ENCODE measurements at regions of chr3 and their contacts with region 1.

Region 1: DNA sequence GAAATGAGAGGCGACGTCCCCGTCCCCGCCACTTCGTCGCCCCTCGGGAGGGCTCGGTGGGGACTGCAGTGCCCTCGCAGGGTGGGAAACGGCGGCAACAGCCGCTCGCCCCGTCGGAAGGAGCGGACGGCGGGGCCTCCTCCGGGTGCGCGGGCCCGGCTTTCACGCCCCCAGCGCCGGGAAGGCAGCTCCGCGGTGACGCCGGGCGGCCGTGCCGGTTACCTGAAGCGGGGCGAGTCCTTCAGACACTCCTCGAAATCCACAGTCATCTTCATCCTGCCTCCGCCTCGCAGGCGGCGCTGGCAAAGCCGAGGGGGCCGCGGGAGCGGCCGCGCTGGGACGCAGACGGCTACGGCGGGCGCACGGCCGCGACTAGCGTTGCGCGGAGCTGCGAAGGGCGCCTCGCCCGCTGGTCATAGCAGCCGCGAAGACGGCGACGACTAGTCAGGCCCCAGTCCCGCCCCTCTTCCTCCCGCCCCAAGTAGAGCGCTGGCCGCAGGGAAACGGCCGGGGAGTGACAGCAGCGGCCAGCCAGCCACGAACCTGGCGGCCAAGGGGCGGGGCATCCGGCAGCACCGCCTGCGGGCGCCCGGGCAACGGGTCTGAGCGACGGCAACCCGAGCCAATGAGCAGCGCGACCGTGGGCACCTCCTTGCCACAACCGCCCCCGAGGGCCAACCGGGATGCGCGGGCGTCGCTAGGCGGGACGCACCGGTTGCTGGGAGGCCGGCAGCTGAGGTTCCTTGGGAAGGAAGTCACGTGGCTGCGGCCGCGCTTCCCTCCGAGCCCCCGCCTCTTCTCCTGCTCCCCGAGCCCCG is at the start of gene ACAP2:
- DNase-seq: peak; percentile 96 to 100 (median 98)
- ATAC-seq: peak; percentile 96
- H3K4me3 ChIP-seq: peak within 1 kb of the TSS; percentile 91
- H3K4me3 Mint-ChIP-seq: peak within 1 kb of the TSS; percentile 94 to 98 (median 96)
- H3K27ac ChIP-seq: peak within 1 kb of the TSS; percentile 87
- H3K27ac Mint-ChIP-seq: peak within 1 kb of the TSS; percentile 84 to 95 (median 91)
- H3K4me1 ChIP-seq: peaks cover 24 to 38% of the 10 kb centered on the region in 2 donors
- H3K4me1 Mint-ChIP-seq: peaks cover 30 to 68% (median 55%) of the 10 kb centered on the region in 7 donors
- H3K27me3 ChIP-seq: no peaks in the 10 kb centered on the region
- H3K27me3 Mint-ChIP-seq: no peaks in the 10 kb centered on the region
- total RNA-seq, gene ACAP2: 68.1 to 111 (median 74.2) TPM

Region 2: DNA sequence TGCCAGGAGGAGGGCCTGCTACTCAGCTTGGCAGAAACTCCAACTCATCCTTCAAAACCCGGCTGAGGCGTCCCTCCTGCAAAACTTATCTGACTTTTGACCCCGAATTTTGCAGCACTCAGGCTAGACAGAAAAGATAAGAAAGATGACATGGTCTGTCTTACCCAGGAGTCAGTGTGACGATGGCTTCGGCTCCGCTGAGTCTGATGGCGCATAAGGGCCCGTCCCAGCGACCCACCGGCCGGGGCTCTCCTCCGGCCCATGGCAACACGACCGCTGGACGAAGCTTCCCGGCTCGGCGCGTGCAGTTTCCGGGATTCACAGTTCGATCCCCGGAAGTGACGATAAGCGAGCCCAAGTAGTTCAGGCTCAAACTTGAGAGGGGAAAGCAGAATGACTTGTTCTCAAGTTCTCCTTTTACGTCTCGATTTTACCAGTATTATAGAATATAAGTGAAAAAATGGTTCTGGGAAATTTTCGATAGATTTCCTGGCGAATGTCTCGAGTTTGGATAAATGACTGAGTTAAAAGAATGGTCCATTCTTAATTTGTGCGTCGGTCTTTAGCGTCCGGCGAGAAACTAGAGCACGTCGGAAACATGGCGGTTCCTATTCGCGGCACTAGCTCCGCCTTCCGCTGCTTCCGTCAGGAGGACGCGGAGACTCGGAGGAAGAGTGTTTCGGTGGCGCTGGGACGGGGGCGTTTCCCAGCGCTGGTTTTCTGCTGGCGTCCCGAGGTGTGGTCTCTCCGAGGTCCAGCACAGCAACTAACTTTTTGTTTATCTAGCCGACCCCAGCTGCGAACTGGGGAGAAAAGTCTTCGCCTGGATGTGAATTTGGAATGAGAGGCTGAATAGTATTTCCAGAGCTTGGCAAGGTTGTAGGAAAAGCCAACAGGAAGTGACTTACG is 770.6 kb before region 1 on chr3 and contains the start of gene LSG1:
- CTCF ChIA-PET with region 1: no interaction called
- POLR2A ChIA-PET with region 1: interaction called, 3 read pairs
- intact Hi-C with region 1: loop called (anchors 1 to 2 kb)
- DNase-seq: peak; percentile 68 to 92 (median 87)
- ATAC-seq: peak; percentile 98
- H3K4me3 ChIP-seq: peak within 1 kb of the TSS; percentile 96
- H3K4me3 Mint-ChIP-seq: peak within 1 kb of the TSS; percentile 95 to 100 (median 98)
- H3K27ac ChIP-seq: peak within 1 kb of the TSS; percentile 90
- H3K27ac Mint-ChIP-seq: peak within 1 kb of the TSS; percentile 96 to 99 (median 98)
- H3K4me1 ChIP-seq: peaks cover 11 to 19% of the 10 kb centered on the region in 2 donors
- H3K4me1 Mint-ChIP-seq: peaks cover 21 to 52% (median 38%) of the 10 kb centered on the region in 7 donors
- H3K27me3 ChIP-seq: no peaks in the 10 kb centered on the region
- H3K27me3 Mint-ChIP-seq: no peaks in the 10 kb centered on the region
- total RNA-seq, gene LSG1: 33.5 to 59.2 (median 54.9) TPM

Region 3: GRCh38 chr3:194769020-194769643 is 673.6 kb before region 1 on chr3:
- CTCF ChIA-PET with region 1: no interaction called
- POLR2A ChIA-PET with region 1: no interaction called
- intact Hi-C with region 1: loop called in 1 of 2 experiments (anchors 10 kb)
- DNase-seq: peak; percentile 59 to 98 (median 93)
- ATAC-seq: peak; percentile 99
- H3K4me3 ChIP-seq: peak overlapping the region; percentile 70
- H3K4me3 Mint-ChIP-seq: peak overlapping the region; percentile 77 to 95 (median 88)
- H3K27ac ChIP-seq: peak overlapping the region; percentile 78
- H3K27ac Mint-ChIP-seq: peak overlapping the region; percentile 57 to 98 (median 94)
- H3K4me1 ChIP-seq: peaks cover 6 to 9% of the 10 kb centered on the region in 2 donors
- H3K4me1 Mint-ChIP-seq: peaks cover 8 to 35% (median 23%) of the 10 kb centered on the region in 7 donors
- H3K27me3 ChIP-seq: no peaks in the 10 kb centered on the region
- H3K27me3 Mint-ChIP-seq: peaks cover 0 to 23% (median 7%) of the 10 kb centered on the region in 5 donors

Region 4: DNA sequence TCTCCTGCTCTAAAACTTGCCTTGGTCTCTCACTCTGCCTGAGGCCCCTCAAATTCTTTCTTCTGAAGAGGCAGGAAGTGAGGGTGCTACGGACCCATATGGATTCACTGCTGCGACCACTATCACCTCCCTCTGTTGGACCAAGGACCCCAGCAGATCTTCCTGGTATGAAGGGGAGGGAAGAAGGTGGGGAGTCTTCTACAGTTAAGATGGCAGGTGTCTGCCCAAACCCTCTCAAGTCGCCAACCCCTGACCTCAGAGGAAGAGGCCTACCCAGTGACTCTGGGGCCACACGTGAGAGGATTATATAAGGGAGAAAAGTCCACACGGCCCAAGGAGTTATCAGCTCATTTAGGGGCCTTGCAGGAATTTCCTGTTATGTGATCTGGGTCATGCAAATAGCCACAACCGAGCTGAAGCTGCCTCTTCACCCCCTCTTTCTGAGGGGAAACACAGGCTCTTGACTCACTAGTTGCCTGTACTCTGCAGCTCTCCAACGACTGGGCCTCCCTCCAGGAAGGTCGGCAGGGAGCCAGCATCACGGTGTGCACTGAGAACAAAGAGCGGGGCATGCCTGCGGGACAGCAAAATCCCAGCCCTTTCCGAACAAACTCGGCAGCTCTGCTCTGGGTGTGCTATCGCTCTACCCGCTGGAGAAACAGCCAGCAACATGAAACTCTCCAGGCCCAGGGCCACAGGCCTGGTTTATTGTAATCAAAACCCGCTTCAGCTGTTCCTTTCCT is 287.8 kb before region 1 on chr3:
- CTCF ChIA-PET with region 1: no interaction called
- POLR2A ChIA-PET with region 1: no interaction called
- intact Hi-C with region 1: no loop called
- DNase-seq: no peak
- ATAC-seq: peak; percentile 33
- H3K4me3 ChIP-seq: no peak overlapping the region
- H3K4me3 Mint-ChIP-seq: no peak overlapping the region
- H3K27ac ChIP-seq: no peak overlapping the region
- H3K27ac Mint-ChIP-seq: peak overlapping the region in 1 of 9 donors; percentile 71
- H3K4me1 ChIP-seq: peaks cover 0 to 4% of the 10 kb centered on the region in 2 donors
- H3K4me1 Mint-ChIP-seq: peaks cover 0 to 33% (median 16%) of the 10 kb centered on the region in 7 donors
- H3K27me3 ChIP-seq: no peaks in the 10 kb centered on the region
- H3K27me3 Mint-ChIP-seq: no peaks in the 10 kb centered on the region

Region 5: GRCh38 chr3:195403852-195404408 is 38.9 kb before region 1 on chr3:
- CTCF ChIA-PET with region 1: no interaction called
- POLR2A ChIA-PET with region 1: interaction called, 3 read pairs
- intact Hi-C with region 1: loop called in 1 of 2 experiments (anchors 5 kb)
- DNase-seq: no peak
- ATAC-seq: no peak
- H3K4me3 ChIP-seq: no peak overlapping the region
- H3K4me3 Mint-ChIP-seq: no peak overlapping the region
- H3K27ac ChIP-seq: no peak overlapping the region
- H3K27ac Mint-ChIP-seq: no peak overlapping the region
- H3K4me1 ChIP-seq: peaks cover 4 to 10% of the 10 kb centered on the region in 2 donors
- H3K4me1 Mint-ChIP-seq: peaks cover 28 to 50% (median 43%) of the 10 kb centered on the region in 7 donors
- H3K27me3 ChIP-seq: no peaks in the 10 kb centered on the region
- H3K27me3 Mint-ChIP-seq: no peaks in the 10 kb centered on the region

Region 6: DNA sequence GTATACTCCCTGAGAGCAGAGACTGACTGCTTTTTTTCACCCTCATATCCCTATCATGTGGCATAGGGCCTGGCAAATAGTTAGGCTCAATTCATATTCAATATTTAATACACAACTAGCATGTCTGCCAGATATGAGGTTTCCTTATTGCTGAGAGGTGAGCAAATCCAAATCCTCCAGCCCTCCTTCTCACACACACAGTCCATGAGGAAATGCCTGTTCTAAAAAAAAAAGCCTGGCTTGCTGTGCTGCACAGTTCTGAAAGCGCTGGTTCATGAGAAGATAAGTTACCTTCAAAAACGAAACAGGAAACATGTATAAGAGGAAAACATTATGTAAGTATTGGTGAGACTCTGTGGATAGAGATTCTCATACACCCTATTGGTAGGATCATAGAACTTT is 15.5 kb after region 1 on chr3:
- CTCF ChIA-PET with region 1: interaction called, 3 read pairs
- POLR2A ChIA-PET with region 1: interaction called, 8 read pairs
- intact Hi-C with region 1: loop called (anchors 1 kb)
- DNase-seq: peak in 7 of 9 donors; percentile 27 to 71 (median 52)
- ATAC-seq: peak; percentile 92
- H3K4me3 ChIP-seq: peak overlapping the region; percentile 45
- H3K4me3 Mint-ChIP-seq: peak overlapping the region; percentile 34 to 90 (median 77)
- H3K27ac ChIP-seq: peak overlapping the region; percentile 59
- H3K27ac Mint-ChIP-seq: peak overlapping the region; percentile 74 to 98 (median 94)
- H3K4me1 ChIP-seq: peaks cover 7 to 16% of the 10 kb centered on the region in 2 donors
- H3K4me1 Mint-ChIP-seq: peaks cover 7 to 37% (median 25%) of the 10 kb centered on the region in 7 donors
- H3K27me3 ChIP-seq: no peaks in the 10 kb centered on the region
- H3K27me3 Mint-ChIP-seq: peaks cover 0 to 5% (median 0%) of the 10 kb centered on the region in 5 donors

Region 7: DNA sequence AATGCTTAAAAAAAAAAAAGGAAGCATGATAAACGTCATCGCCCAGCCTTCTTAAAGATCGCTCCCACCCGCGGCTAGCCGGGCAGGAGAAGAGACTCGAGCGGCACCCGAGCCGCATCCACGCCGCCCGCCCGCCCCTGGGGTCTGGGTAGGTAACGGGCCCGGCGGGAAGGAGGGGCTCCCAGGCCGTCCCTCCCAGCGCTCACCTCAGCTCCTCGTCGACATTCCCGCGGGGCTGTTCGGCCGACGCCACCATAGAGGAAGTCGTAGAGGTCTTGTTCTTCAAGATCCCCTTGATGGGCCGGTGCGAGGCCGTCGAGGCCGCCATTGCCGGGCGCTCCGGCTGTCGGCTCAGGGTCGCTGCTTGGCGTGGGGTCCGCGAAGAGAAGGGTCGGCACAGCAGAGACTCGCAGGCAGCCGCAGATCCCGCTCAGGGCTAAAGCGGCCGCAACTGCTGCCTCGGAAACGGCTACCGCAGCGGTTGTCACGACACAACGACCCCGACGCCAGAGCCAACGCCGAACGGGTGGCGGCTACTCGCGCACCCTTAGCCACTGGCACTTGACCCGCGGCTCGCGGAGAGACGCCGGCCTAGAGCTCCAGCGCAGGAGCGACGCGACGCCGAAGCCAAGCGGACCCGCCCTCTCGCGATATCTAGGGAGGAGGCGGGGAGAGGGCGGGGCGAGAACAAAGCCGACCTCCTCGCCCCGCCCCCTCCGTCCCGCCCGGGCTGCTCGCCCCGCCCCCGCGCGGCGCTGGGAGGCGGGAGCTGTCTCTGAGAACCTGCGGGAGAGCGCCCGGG is 100.1 kb after region 1 on chr3 and contains the start of gene PPP1R2:
- CTCF ChIA-PET with region 1: interaction called, 3 read pairs
- POLR2A ChIA-PET with region 1: interaction called, 18 read pairs
- intact Hi-C with region 1: loop called (anchors 1 to 2 kb)
- DNase-seq: peak; percentile 86 to 97 (median 93)
- ATAC-seq: peak; percentile 94
- H3K4me3 ChIP-seq: peak within 1 kb of the TSS; percentile 63
- H3K4me3 Mint-ChIP-seq: peak within 1 kb of the TSS; percentile 89 to 98 (median 93)
- H3K27ac ChIP-seq: peak within 1 kb of the TSS; percentile 98
- H3K27ac Mint-ChIP-seq: peak within 1 kb of the TSS; percentile 92 to 99 (median 97)
- H3K4me1 ChIP-seq: peaks cover 37 to 66% of the 10 kb centered on the region in 2 donors
- H3K4me1 Mint-ChIP-seq: peaks cover 48 to 77% (median 73%) of the 10 kb centered on the region in 7 donors
- H3K27me3 ChIP-seq: no peaks in the 10 kb centered on the region
- H3K27me3 Mint-ChIP-seq: no peaks in the 10 kb centered on the region
- total RNA-seq, gene PPP1R2: 76.1 to 160 (median 150) TPM

Region 8: GRCh38 chr3:196237203-196237602 is 794.4 kb after region 1 on chr3:
- CTCF ChIA-PET with region 1: no interaction called
- POLR2A ChIA-PET with region 1: no interaction called
- intact Hi-C with region 1: no loop called
- DNase-seq: no peak
- ATAC-seq: no peak
- H3K4me3 ChIP-seq: no peak overlapping the region
- H3K4me3 Mint-ChIP-seq: no peak overlapping the region
- H3K27ac ChIP-seq: no peak overlapping the region
- H3K27ac Mint-ChIP-seq: peak overlapping the region in 2 of 9 donors; percentile 17 to 55
- H3K4me1 ChIP-seq: no peaks in the 10 kb centered on the region
- H3K4me1 Mint-ChIP-seq: peaks cover 0 to 11% (median 4%) of the 10 kb centered on the region in 7 donors
- H3K27me3 ChIP-seq: no peaks in the 10 kb centered on the region
- H3K27me3 Mint-ChIP-seq: no peaks in the 10 kb centered on the region

Region 9: DNA sequence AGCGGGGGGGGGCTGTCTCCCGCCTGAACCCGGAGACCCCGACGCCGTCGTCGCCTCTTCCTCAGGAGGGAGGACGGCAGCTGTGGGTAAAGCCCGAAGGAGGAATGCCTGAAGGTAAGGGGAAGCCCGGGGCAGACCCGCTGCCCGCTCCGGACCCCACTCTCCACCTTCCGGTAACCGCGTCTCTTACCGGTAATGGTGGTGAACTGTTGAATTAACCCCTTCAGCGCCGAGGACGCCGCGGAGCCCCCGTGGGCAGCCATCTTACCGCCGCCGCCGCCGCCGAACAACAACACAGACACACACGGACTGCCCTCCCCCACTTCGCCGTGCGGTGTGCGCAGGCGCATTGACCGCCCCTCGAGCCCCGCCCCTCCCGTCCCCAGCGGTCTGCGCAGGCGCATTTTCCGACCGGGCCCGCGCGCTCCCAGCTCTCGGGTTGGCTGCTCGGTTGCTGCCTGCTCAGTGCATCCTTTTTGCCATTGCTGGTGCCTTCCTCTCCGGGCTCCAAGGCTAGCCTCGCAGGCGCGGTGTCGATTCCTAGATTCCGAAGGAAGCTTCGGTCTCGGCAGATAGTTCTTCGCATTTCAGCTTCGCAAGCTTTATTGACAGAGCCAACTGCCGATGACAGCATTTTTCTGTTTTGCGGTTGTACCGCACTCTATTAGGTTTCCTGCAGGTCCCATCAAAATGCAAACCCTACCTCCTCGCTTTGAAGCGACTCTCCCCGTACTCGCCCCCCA is 989.5 kb after region 1 on chr3 and contains the start of gene UBXN7:
- CTCF ChIA-PET with region 1: no interaction called
- POLR2A ChIA-PET with region 1: no interaction called
- intact Hi-C with region 1: loop called in 1 of 2 experiments (anchors 5 kb)
- DNase-seq: peak; percentile 92 to 97 (median 95)
- ATAC-seq: peak; percentile 94
- H3K4me3 ChIP-seq: peak within 1 kb of the TSS; percentile 100
- H3K4me3 Mint-ChIP-seq: peak within 1 kb of the TSS; percentile 81 to 98 (median 86)
- H3K27ac ChIP-seq: peak within 1 kb of the TSS; percentile 90
- H3K27ac Mint-ChIP-seq: peak within 1 kb of the TSS; percentile 68 to 95 (median 81)
- H3K4me1 ChIP-seq: peaks cover 4 to 6% of the 10 kb centered on the region in 2 donors
- H3K4me1 Mint-ChIP-seq: peaks cover 17 to 39% (median 32%) of the 10 kb centered on the region in 7 donors
- H3K27me3 ChIP-seq: no peaks in the 10 kb centered on the region
- H3K27me3 Mint-ChIP-seq: peaks cover 0 to 2% (median 0%) of the 10 kb centered on the region in 5 donors
- total RNA-seq, gene UBXN7: 52.6 to 90.6 (median 77.0) TPM